ENCODE measurements at regions of chr19 and their contacts with region 1.

Region 1: DNA sequence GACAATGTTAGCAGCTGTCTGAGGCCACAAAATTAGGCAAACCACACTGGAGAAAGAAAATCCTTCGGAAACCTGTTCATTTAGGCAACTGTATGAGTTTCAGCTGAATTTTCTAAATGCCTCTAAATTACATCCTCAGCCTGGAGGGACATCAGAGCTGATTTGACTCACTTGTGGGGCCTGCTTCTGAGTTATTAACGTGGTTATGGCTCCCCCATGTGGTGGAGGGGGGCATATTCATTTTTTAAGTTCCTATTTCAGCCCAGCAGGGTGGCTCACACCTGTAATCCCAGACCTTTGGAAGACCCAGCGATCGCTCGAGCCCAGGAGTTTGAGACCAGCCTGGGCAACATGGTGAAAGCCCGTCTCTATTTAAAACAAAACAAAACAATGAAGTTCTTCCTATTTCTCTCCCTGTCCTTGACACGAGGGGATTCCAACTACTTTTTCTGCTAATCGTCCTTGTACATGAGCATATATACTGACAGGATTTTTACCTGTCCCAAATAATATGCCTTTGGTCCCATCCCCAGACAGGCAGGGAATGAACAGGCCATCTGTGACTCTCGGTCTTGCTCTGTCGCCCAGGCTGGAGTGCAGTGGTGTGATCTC is 31.5 kb upstream of the HIF3A start:
- DNase-seq: no peak
- H3K4me3 ChIP-seq: no peak overlapping the region
- CTCF ChIP-seq: peak; percentile 49

Region 2: DNA sequence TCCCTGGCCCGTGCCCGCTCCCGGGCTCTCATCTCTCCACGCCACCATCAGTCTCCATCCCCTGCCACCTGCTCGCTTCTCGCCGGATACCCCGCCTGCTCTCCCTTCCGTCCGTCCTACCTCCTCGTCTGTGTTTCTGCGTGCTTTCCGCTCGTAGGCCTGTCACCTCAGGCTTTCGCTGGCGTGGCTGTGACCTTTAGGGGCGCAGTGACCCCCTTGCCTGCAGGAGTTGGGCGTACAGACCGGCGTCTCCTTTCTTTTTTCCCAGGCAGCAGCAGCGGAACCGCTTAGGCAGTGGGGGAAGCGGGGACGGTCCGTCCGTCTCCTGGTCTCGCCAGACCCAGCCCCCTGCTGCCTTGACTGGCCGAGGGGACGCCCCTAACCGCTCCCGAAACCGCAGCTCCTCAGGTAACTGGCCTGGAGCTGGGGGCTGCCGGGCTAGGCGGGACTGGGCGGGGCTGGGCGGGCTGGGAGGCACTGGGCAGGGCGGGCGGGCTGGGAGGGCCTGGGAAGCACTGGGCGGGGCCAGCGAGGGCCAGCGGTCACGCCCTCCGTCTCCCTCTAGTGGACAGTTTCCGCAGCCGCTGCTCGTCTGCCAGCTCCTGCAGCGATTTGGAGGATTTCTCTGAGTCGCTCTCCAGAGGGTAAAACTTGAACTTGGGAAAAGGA is 248.8 kb before region 1 on chr19:
- CTCF ChIA-PET with region 1: interaction called, 207 read pairs
- POLR2A ChIA-PET with region 1: no interaction called
- DNase-seq: no peak
- H3K4me3 ChIP-seq: peak overlapping the region; percentile 62
- CTCF ChIP-seq: peak; percentile 89

Region 3: GRCh38 chr19:46030812-46031550 is 234.3 kb before region 1 on chr19:
- CTCF ChIA-PET with region 1: interaction called, 207 read pairs
- POLR2A ChIA-PET with region 1: interaction called, 4 read pairs
- DNase-seq: no peak
- H3K4me3 ChIP-seq: no peak overlapping the region
- CTCF ChIP-seq: no peak

Region 4: GRCh38 chr19:46090444-46090843 is 174.9 kb before region 1 on chr19:
- CTCF ChIA-PET with region 1: interaction called, 485 read pairs
- POLR2A ChIA-PET with region 1: no interaction called
- DNase-seq: no peak
- H3K4me3 ChIP-seq: no peak overlapping the region
- CTCF ChIP-seq: no peak

Region 5: DNA sequence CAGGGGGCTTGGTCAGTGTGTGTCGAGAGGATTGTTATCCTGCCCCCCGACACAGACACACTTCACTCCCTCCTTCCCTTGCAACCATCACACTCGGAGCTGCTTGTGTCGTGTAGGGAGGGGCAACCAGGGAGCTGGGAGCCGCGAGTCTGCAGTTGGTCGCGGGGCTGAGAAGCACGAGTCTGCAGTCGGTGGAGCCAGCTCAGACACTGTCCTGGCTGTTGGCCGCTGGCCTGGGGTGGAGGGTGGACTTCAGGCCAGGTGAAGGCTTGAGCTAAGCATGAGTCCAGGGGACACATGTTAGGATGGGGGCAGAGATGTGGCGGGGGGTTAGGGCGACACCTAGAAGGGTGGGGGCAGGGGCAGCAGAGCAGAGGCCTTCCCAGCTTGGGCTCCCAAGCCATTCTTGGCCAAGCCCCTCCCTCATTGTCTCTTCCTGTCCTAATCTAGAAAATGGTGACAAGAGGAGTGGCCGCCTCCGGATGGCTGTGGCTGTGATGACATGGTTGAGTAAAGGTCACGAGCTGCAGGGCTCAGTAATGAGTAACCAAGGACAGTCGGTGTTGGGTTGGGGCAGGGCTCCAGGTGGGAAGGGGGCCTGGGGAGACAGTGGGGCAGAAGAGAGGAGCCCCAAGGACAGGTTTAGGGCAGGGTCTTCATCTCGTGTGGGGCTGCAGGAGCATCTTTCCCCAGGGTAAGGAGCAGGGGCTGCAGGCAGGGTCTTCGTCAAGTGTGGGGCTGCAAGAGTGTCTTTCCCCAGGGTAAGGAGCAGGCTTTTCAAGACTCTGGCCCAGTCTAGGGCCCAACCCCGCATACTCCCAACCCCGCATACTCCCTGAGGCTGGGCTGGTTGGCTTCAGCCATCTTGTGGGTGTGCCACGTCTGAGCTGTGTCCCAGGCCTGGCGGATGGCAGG is 90.2 kb after region 1 on chr19:
- CTCF ChIA-PET with region 1: no interaction called
- POLR2A ChIA-PET with region 1: no interaction called
- DNase-seq: no peak
- H3K4me3 ChIP-seq: no peak overlapping the region
- CTCF ChIP-seq: no peak